ENCODE measurements at regions of chr6 and their contacts with region 1.

Region 1: GRCh38 chr6:53725791-53726431 is 60.4 kb upstream of the KLHL31 start:
- DNase-seq: peak in 1 of 2 experiments; percentile 72
- H3K4me3 ChIP-seq: no peak overlapping the region
- H3K27ac ChIP-seq: no peak overlapping the region
- H3K4me1 ChIP-seq: peaks cover 55% of the 10 kb centered on the region
- H3K27me3 ChIP-seq: no peaks in the 10 kb centered on the region
- CTCF ChIP-seq: peak; percentile 92

Region 2: GRCh38 chr6:53070806-53071205 is 655.1 kb before region 1 on chr6:
- CTCF ChIA-PET with region 1: interaction called, 11 read pairs
- POLR2A ChIA-PET with region 1: no interaction called
- intact Hi-C with region 1: no loop called
- DNase-seq: no peak
- H3K4me3 ChIP-seq: no peak overlapping the region
- H3K27ac ChIP-seq: no peak overlapping the region
- H3K4me1 ChIP-seq: peaks cover 22% of the 10 kb centered on the region
- H3K27me3 ChIP-seq: no peaks in the 10 kb centered on the region
- CTCF ChIP-seq: no peak

Region 3: GRCh38 chr6:53287336-53288225 is 438.3 kb before region 1 on chr6:
- CTCF ChIA-PET with region 1: interaction called, 12 read pairs
- POLR2A ChIA-PET with region 1: no interaction called
- intact Hi-C with region 1: no loop called
- DNase-seq: no peak
- H3K4me3 ChIP-seq: no peak overlapping the region
- H3K27ac ChIP-seq: no peak overlapping the region
- H3K4me1 ChIP-seq: no peaks in the 10 kb centered on the region
- H3K27me3 ChIP-seq: no peaks in the 10 kb centered on the region
- CTCF ChIP-seq: no peak

Region 4: GRCh38 chr6:53492860-53493634 is 232.9 kb before region 1 on chr6:
- CTCF ChIA-PET with region 1: interaction called, 9 read pairs
- POLR2A ChIA-PET with region 1: no interaction called
- intact Hi-C with region 1: loop called (anchors 1 kb)
- DNase-seq: no peak
- H3K4me3 ChIP-seq: no peak overlapping the region
- H3K27ac ChIP-seq: no peak overlapping the region
- H3K4me1 ChIP-seq: peaks cover 17% of the 10 kb centered on the region
- H3K27me3 ChIP-seq: no peaks in the 10 kb centered on the region
- CTCF ChIP-seq: peak; percentile 80